ENCODE measurements at regions of chr11 and their contacts with region 1.

Region 1: DNA sequence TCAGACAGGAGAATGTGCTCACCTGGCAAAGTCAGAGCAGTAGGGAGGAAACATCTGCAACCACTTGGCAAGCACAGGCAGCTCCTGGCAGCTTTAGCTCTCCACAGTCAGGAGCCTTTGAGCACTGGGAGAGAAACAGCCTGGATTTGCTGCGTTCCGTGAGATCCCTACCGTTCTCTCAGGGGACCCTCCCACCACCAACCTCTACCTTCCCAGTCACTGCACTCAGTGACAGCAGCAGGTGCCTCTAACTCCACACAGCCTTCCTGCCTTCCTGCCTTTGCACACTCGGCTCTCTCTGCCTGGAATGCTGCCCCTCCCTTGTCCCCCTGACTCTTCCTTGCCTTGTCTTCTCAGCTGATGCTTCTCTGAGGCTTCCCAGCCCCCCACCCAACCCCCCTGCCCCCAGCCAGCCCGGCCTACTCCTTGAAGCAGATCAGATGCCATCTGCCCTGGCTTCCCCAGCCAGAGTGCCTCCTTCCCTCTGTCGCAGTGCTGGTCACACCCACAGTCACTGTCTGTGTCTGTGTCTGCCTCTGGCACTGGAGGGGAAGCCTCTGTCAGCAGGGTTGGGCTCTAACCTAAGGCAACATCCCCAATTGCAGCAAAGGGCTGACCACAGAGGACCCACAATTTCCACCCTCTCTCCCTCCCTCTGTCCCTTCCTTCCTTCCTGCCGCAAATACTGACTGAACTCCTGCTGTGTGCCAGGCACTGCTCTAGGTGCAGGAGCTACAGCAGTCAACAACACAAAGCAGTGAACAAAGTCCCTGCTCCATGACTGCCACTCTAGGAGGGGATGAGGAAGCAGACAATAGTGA is 14.9 kb upstream of the TSKU start:
- DNase-seq: peak; percentile 60
- H3K4me3 ChIP-seq: peak overlapping the region in 1 of 3 experiments; percentile 31
- H3K27ac ChIP-seq: no peak overlapping the region
- H3K4me1 ChIP-seq: peaks cover 56% of the 10 kb centered on the region
- H3K27me3 ChIP-seq: no peaks in the 10 kb centered on the region
- CTCF ChIP-seq: no peak

Region 2: DNA sequence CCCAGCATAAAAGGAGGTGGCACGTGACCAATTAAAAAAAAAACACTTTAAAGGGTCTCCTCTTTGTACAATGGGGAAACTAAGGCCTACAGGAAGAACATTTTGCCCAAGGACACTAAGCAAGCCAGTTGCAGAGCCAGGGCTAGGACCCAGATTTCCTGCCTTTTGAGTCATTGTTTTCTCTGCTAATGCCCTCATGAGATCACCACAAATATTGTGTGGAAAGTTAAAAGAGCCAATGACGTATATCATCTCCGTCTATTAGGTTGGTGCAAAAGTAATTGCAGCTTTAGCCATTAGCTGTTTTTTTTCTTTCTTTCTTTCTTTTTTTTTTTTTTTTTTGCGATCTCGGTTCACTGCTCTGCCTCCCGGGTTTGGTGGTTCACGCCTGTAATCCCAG is 73.6 kb before region 1 on chr11:
- CTCF ChIA-PET with region 1: no interaction called
- dilution Hi-C with region 1: loop called (anchors 5 kb)
- in situ Hi-C with region 1: no loop called
- intact Hi-C with region 1: no loop called
- DNase-seq: peak; percentile 37
- H3K4me3 ChIP-seq: no peak overlapping the region
- H3K27ac ChIP-seq: no peak overlapping the region
- H3K4me1 ChIP-seq: no peaks in the 10 kb centered on the region
- H3K27me3 ChIP-seq: no peaks in the 10 kb centered on the region
- CTCF ChIP-seq: no peak

Region 3: DNA sequence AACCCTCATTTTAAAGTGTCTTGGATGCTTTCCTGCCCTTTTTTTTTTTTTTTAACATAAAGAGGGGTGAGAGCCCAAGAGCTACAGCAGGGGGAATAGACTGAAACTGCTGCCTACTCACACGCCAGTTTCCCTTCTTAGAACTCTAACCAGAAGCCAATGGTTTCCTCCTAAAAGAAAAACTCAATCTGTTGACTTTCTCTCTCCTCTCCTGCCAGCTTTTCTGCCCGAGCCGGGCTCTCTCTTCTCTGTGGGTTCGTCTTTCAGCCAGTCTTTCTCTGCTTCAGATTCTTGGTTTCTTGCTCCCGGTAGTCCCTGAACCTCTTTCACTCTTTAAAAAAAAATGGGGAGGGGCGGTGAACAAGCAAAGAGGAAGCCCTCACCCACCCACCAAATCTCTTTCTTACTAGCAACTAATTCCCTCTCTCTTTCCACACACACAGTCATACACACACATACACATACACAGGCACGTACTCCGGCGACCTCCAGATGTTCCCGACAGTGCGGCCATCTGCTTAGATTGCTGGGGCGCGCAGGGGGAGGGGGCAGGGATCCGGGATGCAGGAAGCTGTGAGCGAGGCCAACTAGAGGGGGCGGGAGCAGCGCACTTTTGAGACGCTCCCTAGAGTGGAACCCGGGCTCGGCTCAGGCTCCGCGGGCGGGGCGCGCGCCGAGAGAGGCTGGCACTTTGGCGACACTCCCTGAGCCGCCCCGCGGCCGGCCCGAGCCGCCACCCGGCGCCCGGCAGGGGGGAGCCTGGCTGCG is 14.4 kb after region 1 on chr11:
- CTCF ChIA-PET with region 1: no interaction called
- dilution Hi-C with region 1: no loop called
- in situ Hi-C with region 1: no loop called
- intact Hi-C with region 1: loop called (anchors 2 kb)
- DNase-seq: peak; percentile 92
- H3K4me3 ChIP-seq: peak overlapping the region; percentile 86 to 98 (median 97)
- H3K27ac ChIP-seq: peak overlapping the region; percentile 89
- H3K4me1 ChIP-seq: peaks cover 42% of the 10 kb centered on the region
- H3K27me3 ChIP-seq: no peaks in the 10 kb centered on the region
- CTCF ChIP-seq: no peak

Region 4: DNA sequence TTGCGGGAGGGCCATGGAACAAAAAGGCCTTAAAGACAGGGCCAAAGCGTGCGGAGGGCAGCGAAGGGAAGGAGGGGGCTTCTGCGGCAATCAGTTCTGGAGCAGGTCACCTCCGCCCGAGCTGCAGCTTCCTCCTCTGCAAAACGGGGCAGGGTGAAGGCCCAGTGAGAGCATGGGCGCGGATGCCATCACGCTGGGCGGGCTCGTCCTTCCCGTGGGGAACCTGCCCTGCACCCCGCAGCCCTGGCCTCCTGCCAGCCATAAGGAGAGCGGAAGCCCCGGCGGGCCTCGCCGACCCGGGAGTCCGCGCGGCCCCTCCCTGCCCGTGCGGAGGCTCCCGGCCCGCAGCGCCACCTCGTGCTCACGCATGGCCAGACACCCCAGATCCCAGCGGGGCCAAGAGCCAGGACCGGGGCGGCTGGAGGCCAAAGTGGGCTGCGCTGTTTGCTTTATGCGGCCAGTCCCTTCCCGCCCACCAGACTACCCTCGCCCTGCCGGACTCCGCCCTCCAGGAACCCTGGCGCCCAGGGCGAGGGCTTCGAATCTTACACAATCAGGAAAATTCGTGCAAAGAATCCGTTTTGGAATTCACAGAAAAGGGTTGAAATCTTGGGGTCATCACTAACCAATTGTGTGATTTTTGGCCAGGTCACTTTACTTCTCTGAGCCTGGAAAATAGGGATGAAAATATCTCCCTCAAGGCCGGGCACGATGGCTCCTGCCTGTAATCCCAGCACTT is 30.9 kb after region 1 on chr11:
- CTCF ChIA-PET with region 1: no interaction called
- dilution Hi-C with region 1: loop called (anchors 5 kb)
- in situ Hi-C with region 1: no loop called
- intact Hi-C with region 1: no loop called
- DNase-seq: peak; percentile 47
- H3K4me3 ChIP-seq: no peak overlapping the region
- H3K27ac ChIP-seq: no peak overlapping the region
- H3K4me1 ChIP-seq: peaks cover 14% of the 10 kb centered on the region
- H3K27me3 ChIP-seq: no peaks in the 10 kb centered on the region
- CTCF ChIP-seq: peak; percentile 65 to 93

Measured in mammary epithelial cell (primary cell).